Upper lobe of right lung (tissue), 1 donor: ENCODE measurements at regions of chr7 and their contacts with region 1.

Region 1: DNA sequence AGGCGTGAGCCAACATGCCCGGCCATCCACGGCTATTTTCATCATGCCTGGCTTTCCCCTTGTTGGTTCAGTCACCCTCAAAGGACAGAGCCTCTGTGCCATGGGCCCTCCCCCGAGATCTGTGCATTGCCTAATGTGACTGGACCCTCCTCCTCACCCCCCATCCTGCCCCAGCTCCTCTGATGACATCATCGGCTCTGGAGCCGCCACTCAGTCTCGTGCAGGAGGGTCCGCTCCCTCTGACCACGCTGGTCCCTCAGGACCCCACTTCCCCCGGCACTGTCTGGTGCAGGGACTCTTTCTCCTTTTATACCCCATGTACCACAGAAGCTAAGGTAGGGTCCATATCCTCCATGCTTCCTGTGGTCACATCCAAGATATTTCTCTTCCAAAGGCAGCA is 33.2 kb upstream of the BAIAP2L1 start:
- DNase-seq: no peak
- ATAC-seq: no peak
- H3K4me3 ChIP-seq: no peak overlapping the region
- H3K27ac ChIP-seq: no peak overlapping the region
- H3K4me1 ChIP-seq: no peaks in the 10 kb centered on the region
- H3K27me3 ChIP-seq: no peaks in the 10 kb centered on the region
- CTCF ChIP-seq: no peak

Region 2: GRCh38 chr7:98211221-98211675 is 222.8 kb before region 1 on chr7 and contains the start of gene BHLHA15:
- intact Hi-C with region 1: no loop called
- DNase-seq: peak; percentile 83
- ATAC-seq: peak; percentile 68
- H3K4me3 ChIP-seq: peak within 1 kb of the TSS; percentile 30
- H3K27ac ChIP-seq: no peak within 1 kb of the TSS
- H3K4me1 ChIP-seq: no peaks in the 10 kb centered on the region
- H3K27me3 ChIP-seq: no peaks in the 10 kb centered on the region
- CTCF ChIP-seq: no peak
- total RNA-seq, gene BHLHA15: 0.81 TPM

Region 3: GRCh38 chr7:98841179-98841997 is 407.3 kb after region 1 on chr7:
- intact Hi-C with region 1: loop called (anchors 5 kb)
- DNase-seq: peak; percentile 82
- ATAC-seq: peak; percentile 93
- H3K4me3 ChIP-seq: no peak overlapping the region
- H3K27ac ChIP-seq: no peak overlapping the region
- H3K4me1 ChIP-seq: peaks cover 6% of the 10 kb centered on the region
- H3K27me3 ChIP-seq: no peaks in the 10 kb centered on the region
- CTCF ChIP-seq: peak; percentile 98